Left cardiac atrium (tissue), 4 donors: ENCODE measurements at regions of chr9 and their contacts with region 1.

Region 1: DNA sequence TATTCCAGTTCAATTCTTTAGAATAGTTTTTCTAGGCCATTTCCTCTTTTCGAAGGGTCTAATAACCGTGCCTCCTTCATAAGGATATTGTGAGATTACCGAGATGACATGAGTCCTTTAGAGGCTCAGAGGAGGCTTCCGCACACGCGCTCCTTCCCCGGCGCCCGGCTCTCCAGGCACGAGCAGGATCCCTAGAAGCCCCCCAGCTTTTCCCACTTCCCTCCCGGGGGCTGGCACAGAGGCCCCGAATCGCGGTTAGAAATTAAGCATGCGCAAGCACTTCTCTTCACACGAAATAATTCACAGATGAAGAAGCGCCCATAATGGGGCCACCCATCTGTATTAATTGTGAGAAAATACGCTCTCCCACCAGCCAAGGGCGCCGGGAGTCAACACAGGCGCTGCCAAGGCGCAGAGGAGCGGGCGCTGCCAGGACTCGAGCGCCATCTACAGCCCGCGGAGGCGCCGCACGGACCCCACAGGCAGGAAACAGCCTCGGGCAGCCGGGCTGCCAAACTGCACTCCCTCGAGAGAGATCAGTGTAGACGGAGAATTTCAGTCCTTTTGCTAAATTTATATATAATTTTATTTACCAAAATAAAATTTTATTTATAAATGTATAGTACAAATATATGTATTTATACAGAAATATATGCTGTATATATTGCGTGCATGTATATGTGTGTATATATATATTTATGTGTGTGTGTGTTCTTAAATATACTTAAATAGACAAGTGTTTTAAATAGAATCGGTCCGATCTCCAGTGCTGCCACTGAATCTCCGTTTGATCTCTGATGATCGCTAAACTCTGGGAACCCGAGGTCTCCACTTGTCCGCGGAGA is 258.1 kb upstream of the NFIL3 start:
- DNase-seq: peak; percentile 84
- ATAC-seq: peak; percentile 96 to 97

Region 2: DNA sequence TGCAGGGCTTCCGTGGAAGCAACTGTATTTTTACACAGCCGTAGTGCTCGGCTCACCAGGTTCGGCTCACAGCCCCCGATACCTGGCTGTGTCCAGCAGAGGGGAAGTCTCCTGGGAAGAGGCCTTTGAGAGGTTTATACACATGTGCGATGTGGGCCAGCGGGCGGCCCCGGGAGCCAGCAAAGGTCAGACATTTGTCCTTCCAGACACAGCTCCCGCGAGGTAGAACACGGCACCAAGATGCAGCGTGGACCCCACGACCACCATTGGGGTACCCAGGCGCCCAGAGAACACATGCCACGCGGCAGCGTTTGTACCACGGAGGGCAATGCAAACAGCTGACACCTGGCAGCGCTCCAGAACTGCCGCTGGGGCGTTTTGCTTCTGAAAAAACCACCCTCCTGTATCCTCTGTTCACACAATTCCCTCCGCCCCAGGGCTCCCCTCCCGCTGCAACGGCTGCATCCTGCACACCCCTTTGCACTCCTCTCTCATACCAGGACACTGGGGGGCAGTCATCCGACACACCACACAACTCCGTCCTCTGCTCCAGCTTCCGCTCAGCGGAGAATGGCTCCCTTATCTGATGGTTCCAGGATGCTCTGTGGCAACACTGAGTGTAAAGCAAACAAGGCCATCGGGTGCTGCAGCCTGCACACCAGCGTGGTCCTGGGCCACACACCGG is 644.7 kb before region 1 on chr9:
- intact Hi-C with region 1: loop called in 1 of 2 experiments (anchors 10 kb)
- DNase-seq: peak; percentile 84
- ATAC-seq: peak; percentile 97 to 99